ENCODE measurements at regions of chr4 and their contacts with region 1.

Region 1: GRCh38 chr4:165207431-165208220 is at the start of gene KLHL2:
- DNase-seq: peak; percentile 93
- H3K4me3 Mint-ChIP-seq: peak within 1 kb of the TSS; percentile 93
- H3K27ac Mint-ChIP-seq: peak within 1 kb of the TSS; percentile 90
- H3K4me1 Mint-ChIP-seq: peaks cover 62% of the 10 kb centered on the region
- H3K27me3 Mint-ChIP-seq: no peaks in the 10 kb centered on the region
- total RNA-seq, gene KLHL2: 39.5 and 42.7 TPM in 2 replicates

Region 2: GRCh38 chr4:164700471-164700870 is 507.2 kb before region 1 on chr4:
- intact Hi-C with region 1: no loop called
- DNase-seq: peak; percentile 62
- H3K4me3 Mint-ChIP-seq: no peak overlapping the region
- H3K27ac Mint-ChIP-seq: no peak overlapping the region
- H3K4me1 Mint-ChIP-seq: peaks cover 2% of the 10 kb centered on the region
- H3K27me3 Mint-ChIP-seq: peaks cover 5% of the 10 kb centered on the region

Region 3: GRCh38 chr4:165131247-165131832 is 76.3 kb before region 1 on chr4:
- intact Hi-C with region 1: loop called (anchors 5 kb)
- DNase-seq: peak; percentile 95
- H3K4me3 Mint-ChIP-seq: no peak overlapping the region
- H3K27ac Mint-ChIP-seq: no peak overlapping the region
- H3K4me1 Mint-ChIP-seq: peaks cover 17% of the 10 kb centered on the region
- H3K27me3 Mint-ChIP-seq: peaks cover 17% of the 10 kb centered on the region

Region 4: DNA sequence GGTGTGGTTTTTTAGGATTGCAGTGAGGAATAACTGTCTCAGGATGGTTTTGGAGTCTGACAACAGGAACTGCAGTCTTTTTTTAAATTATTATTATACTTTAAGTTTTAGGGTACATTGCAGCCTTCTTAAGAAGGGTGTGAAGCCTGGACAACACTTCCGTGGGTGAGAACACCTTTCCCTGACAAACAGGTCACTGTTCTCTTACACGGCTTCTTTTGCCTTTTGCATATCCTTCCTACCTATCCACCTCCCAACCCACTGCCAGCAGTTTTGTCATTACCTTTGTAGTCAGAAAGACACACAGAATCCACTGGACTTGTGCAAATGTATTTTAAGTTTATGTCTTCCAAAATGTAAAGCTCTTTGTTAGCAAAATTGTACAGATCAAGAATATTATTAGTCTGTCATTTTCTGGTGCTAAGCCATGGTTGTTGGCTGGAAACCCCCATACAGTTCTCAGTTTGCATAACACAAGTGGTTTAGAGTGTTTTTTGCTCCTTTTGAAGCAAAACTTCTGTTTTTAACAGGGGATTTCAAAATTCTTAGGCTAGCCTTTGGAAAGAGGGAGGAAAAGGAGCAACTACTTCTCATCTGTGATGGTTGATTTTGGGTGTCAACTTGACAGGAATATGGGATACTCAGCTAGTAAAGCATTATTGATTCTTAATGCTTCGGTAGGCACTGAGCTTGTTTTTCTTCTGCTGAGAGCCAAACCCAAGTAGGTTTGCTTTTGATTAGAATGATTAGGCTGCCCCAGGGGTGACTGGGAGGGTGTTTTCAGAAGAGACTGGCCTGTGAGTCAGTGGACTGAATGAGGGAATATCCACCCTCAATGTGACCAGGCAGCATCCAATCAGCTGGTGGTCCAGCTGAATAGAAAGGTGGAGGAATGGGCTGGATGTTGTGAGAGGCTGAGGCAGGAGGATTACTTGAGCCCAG is 29.6 kb before region 1 on chr4:
- intact Hi-C with region 1: no loop called
- DNase-seq: no peak
- H3K4me3 Mint-ChIP-seq: no peak overlapping the region
- H3K27ac Mint-ChIP-seq: peak overlapping the region; percentile 5
- H3K4me1 Mint-ChIP-seq: no peaks in the 10 kb centered on the region
- H3K27me3 Mint-ChIP-seq: no peaks in the 10 kb centered on the region

Region 5: GRCh38 chr4:165248102-165248501 is 40.5 kb after region 1 on chr4:
- intact Hi-C with region 1: loop called (anchors 10 kb)
- DNase-seq: no peak
- H3K4me3 Mint-ChIP-seq: no peak overlapping the region
- H3K27ac Mint-ChIP-seq: no peak overlapping the region
- H3K4me1 Mint-ChIP-seq: peaks cover 17% of the 10 kb centered on the region
- H3K27me3 Mint-ChIP-seq: no peaks in the 10 kb centered on the region

Region 6: DNA sequence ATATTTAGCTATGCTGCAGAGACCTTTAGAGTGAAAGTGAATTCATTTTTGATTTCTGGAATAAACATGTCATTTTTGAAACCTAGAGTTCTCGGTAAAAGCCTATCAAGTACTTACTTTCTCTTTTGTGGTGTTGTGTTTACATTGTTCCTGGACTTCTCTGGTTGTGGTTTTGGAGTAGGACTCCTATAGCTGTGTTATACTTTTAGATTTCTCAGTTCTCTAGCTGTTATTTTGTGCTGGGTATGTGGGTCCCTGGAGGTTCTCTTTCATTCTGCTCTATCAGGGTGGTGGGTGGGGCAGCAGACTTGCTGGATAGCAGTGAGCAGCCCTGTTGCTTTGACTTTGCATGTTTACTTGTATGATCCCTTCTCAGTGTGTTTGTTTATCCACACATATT is 94.2 kb after region 1 on chr4:
- intact Hi-C with region 1: loop called (anchors 2 kb)
- DNase-seq: peak; percentile 79
- H3K4me3 Mint-ChIP-seq: peak overlapping the region; percentile 75
- H3K27ac Mint-ChIP-seq: peak overlapping the region; percentile 74
- H3K4me1 Mint-ChIP-seq: peaks cover 23% of the 10 kb centered on the region
- H3K27me3 Mint-ChIP-seq: no peaks in the 10 kb centered on the region

Region 7: GRCh38 chr4:166493828-166494432 is 1286.3 kb after region 1 on chr4:
- intact Hi-C with region 1: no loop called
- DNase-seq: no peak
- H3K4me3 Mint-ChIP-seq: no peak overlapping the region
- H3K27ac Mint-ChIP-seq: no peak overlapping the region
- H3K4me1 Mint-ChIP-seq: no peaks in the 10 kb centered on the region
- H3K27me3 Mint-ChIP-seq: no peaks in the 10 kb centered on the region

Measured in activated CD4-positive, alpha-beta T cell treated with anti-CD3 and anti-CD28 coated beads, Interleukin-2, amount 10 ng/mL, durations not matched to agents 24 days and 14 days (primary cell).